ENCODE measurements at regions of chr1 and their contacts with region 1.

Region 1: GRCh38 chr1:181088079-181089016 is at the start of gene IER5:
- DNase-seq: peak; percentile 95 to 98
- ATAC-seq: peak; percentile 84 to 87 (median 86)
- H3K4me3 ChIP-seq: peak within 1 kb of the TSS; percentile 91
- H3K27ac ChIP-seq: peak within 1 kb of the TSS; percentile 97
- H3K4me1 ChIP-seq: peaks cover 33% of the 10 kb centered on the region
- H3K27me3 ChIP-seq: no peaks in the 10 kb centered on the region
- CTCF ChIP-seq: no peak
- total RNA-seq, gene IER5: 19.9 to 110 (median 48.6) TPM

Region 2: GRCh38 chr1:180842052-180842451 is 246.3 kb before region 1 on chr1:
- intact Hi-C with region 1: no loop called
- DNase-seq: no peak
- ATAC-seq: no peak
- H3K4me3 ChIP-seq: no peak overlapping the region
- H3K27ac ChIP-seq: no peak overlapping the region
- H3K4me1 ChIP-seq: no peaks in the 10 kb centered on the region
- H3K27me3 ChIP-seq: no peaks in the 10 kb centered on the region
- CTCF ChIP-seq: no peak

Region 3: DNA sequence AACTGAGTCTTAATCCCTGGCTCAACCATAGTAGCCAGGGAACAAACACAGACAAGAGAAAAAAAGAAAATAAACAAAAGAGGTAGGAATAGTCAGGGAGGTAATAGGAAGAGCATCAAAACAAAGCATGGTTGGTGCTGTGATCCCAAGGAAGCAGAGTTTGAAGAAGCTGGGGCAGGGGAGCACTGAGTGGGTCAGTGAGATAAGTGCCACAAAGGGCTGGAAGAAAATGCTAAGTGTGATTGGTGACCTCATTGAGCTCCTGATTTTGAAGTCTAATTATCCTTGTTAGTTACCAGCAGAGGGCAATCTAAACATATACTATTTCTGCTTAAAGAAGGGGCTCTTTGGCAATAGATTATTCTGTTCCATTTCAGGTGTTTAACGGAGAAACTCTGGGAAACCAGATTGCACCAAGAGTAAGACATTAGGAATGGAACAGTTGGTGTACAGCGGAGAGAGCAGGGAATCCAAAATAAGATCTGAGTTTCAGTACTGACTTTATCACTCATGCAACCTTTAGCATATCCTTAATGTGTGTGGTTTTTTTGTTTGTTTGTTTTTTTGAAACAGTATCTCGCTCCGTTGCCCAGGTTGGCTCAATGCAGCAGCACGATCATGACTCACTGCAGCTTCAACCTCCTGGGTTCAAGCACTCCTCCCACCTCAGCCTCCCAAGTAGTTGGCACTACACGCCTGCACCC is 206.4 kb before region 1 on chr1:
- intact Hi-C with region 1: loop called in 1 of 2 experiments (anchors 10 kb)
- DNase-seq: no peak
- ATAC-seq: peak; percentile 58 to 80 (median 71)
- H3K4me3 ChIP-seq: no peak overlapping the region
- H3K27ac ChIP-seq: peak overlapping the region; percentile 27
- H3K4me1 ChIP-seq: no peaks in the 10 kb centered on the region
- H3K27me3 ChIP-seq: no peaks in the 10 kb centered on the region
- CTCF ChIP-seq: peak; percentile 59

Region 4: DNA sequence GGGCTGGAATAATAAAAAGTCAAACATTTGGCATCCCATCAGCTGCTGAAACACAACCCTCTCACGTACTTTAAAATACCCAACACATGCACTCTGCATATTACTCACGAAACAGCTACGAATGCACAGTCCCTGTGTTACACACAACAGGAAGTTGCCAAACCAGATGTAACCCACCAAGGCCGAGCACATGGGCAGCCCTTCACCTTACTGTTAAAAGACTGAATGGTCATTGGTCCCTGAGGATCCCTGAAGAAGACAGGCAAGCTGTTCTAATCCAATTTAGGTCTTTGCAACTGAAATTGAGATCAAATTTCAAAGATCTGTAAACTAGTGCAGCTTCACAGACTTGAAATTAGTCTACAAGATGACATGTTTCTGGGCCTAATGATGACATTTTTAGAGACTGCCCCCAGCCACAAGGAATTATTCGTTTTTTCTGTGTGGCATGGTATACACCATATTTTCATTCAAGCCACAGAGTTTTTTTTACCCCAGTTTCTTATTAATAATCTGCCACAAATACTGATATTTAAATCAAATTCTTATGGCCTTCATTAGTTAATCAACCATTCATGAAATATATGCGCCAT is 25.4 kb before region 1 on chr1:
- intact Hi-C with region 1: loop called (anchors 2 kb)
- DNase-seq: peak; percentile 39 to 71
- ATAC-seq: peak; percentile 74 to 86 (median 84)
- H3K4me3 ChIP-seq: peak overlapping the region; percentile 54
- H3K27ac ChIP-seq: peak overlapping the region; percentile 94
- H3K4me1 ChIP-seq: peaks cover 30% of the 10 kb centered on the region
- H3K27me3 ChIP-seq: no peaks in the 10 kb centered on the region
- CTCF ChIP-seq: no peak

Region 5: DNA sequence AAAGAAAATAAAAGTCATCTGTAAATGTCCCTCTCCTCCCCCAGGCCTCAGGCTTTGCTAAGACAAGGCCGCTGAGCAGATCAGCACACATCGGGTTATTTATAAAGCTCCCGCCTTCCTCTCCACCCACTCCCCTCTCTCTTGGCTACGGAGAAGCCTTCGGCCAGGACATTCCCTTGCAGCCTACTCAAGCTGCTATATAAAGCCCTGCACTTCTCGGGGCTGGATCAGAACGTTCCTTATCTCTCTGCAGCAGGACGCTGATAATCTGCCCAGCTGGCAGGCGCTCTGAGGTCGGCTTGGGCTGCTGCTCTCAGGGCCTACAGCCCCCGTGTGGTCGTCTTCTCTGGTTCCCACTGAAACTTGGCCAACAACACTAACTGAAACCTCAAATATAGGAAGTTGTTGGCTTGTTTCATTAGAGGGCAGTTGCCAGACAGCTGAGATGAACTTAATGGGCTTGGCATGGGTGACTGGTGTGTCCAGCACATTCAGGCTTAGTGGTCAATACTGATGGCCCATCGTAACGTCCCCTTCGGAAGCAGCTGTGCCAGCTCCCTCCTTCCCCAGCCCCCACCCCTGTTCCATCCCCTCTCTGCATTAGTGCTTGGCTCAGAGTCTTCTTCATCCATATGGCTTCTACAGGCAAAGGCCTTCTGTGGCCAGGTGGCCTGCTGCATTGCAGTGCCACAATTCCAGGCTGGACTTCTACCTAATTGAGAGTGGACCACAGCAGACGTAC is 64.7 kb after region 1 on chr1:
- intact Hi-C with region 1: loop called in 1 of 2 experiments (anchors 2 kb)
- DNase-seq: peak; percentile 84 to 95
- ATAC-seq: peak; percentile 88 to 94 (median 90)
- H3K4me3 ChIP-seq: peak overlapping the region; percentile 2
- H3K27ac ChIP-seq: peak overlapping the region; percentile 96
- H3K4me1 ChIP-seq: peaks cover 49% of the 10 kb centered on the region
- H3K27me3 ChIP-seq: no peaks in the 10 kb centered on the region
- CTCF ChIP-seq: peak; percentile 35

Region 6: DNA sequence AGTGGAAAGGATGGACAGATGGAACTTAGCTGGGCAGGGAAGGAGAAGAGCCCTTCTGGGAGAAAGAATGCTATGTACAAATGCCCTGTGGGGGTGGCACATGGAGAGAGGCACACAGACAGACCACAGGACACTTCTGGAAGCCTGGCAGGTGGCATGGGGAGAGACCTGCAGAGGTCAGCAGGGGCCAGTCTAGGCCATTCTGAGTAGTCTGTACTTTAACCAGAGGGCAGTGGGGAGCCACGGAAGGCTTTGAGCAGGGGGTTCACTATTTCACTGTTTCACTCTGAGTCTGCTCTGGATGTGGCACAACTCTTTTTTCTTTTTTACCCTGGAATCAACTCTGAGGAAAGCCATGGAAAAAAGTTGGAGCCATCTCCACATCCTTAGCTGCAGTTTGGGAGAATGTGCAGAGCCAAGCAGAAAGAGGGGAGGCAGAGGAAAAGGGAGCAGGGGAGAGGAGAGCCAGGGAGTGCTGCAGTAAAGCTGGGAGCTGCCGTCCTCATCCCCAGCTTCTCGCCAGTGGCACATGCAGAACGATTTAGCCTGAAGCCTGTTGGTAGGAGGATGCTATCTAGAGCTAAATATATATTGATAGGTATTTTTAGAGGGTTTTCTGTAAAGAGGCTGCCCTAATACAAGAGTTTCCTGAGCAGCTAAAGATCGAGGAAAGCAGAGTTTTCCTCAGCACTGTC is 429.0 kb after region 1 on chr1:
- intact Hi-C with region 1: no loop called
- DNase-seq: no peak
- ATAC-seq: no peak
- H3K4me3 ChIP-seq: no peak overlapping the region
- H3K27ac ChIP-seq: no peak overlapping the region
- H3K4me1 ChIP-seq: no peaks in the 10 kb centered on the region
- H3K27me3 ChIP-seq: no peaks in the 10 kb centered on the region
- CTCF ChIP-seq: no peak